ENCODE measurements at regions of chr3 and their contacts with region 1.

Region 1: DNA sequence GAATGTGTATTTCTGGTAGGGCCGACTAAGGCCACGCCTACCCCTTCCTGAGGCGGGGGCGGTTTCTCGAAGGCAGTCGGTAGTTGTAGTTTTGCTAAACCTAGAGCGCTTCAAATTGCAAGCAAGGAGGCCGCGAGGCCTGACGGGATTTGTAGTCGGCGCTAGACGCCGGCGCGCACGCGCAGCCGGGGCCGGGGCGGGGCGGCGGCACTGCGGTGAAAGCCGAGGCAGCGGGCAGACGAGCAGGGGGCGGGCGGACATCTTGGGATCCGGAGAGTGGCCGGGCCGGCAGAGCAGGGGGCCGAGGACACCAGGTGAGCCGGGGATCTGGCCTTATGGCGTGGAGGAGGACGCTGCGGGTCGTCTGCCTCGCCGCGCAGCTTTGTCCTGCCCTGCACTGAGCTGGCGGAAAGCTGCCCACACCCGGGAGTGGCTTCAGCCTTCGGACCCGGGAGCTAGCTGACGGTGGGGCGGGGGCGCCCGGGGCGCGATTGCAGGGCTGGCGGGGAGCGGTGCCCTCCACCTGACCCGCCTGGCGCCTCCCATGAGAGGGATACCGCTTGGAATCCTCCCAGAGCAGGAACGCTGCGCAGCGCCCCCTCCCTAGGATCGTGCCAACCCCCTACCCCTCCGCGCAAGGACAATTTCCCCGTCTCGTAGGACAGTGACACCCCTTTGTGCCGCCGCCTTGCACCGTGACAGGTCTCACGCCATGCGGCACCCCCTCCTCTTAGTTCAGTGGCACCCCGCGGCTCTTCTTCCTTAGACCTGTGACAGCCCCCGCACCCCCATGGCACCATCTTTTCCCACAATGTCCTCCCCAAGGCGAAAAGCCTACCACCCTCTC is at the start of gene AP2M1:
- DNase-seq: peak; percentile 98
- H3K4me3 Mint-ChIP-seq: peak within 1 kb of the TSS; percentile 97
- H3K27ac Mint-ChIP-seq: peak within 1 kb of the TSS; percentile 85
- H3K4me1 Mint-ChIP-seq: peaks cover 33% of the 10 kb centered on the region
- H3K27me3 Mint-ChIP-seq: no peaks in the 10 kb centered on the region
- total RNA-seq, gene AP2M1: 206 to 218 TPM

Region 2: GRCh38 chr3:184185461-184186308 is 10.8 kb after region 1 on chr3 and contains the start of gene ABCF3:
- CTCF ChIA-PET with region 1: interaction called, 3 read pairs
- POLR2A ChIA-PET with region 1: interaction called, 36 read pairs
- DNase-seq: peak; percentile 99
- H3K4me3 Mint-ChIP-seq: peak within 1 kb of the TSS; percentile 93
- H3K27ac Mint-ChIP-seq: peak within 1 kb of the TSS; percentile 88
- H3K4me1 Mint-ChIP-seq: peaks cover 36% of the 10 kb centered on the region
- H3K27me3 Mint-ChIP-seq: no peaks in the 10 kb centered on the region
- total RNA-seq, gene ABCF3: 53.7 to 60.1 TPM

Region 3: DNA sequence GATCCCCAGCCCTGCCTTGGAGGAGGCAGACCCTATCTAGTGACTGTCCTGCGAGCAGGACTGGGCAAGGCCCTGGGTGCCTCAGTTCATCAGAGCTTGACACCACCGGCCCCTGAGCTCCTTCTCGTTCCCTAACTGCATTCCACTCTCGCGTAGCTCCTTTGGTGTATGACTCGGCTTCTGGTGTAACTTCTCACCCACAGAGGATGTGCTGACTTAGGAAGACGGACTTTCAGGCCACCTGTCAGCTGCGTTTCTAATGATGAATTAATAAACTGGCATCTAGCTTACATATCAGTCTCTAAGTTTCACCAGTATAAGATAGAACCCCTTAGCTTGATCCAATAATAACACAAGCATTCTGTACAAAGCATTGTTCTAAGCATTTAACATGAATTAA is 28.7 kb after region 1 on chr3:
- CTCF ChIA-PET with region 1: no interaction called
- POLR2A ChIA-PET with region 1: no interaction called
- DNase-seq: no peak
- H3K4me3 Mint-ChIP-seq: no peak overlapping the region
- H3K27ac Mint-ChIP-seq: no peak overlapping the region
- H3K4me1 Mint-ChIP-seq: no peaks in the 10 kb centered on the region
- H3K27me3 Mint-ChIP-seq: peaks cover 16% of the 10 kb centered on the region